ENCODE measurements at regions of chr3 and their contacts with region 1.

Region 1: DNA sequence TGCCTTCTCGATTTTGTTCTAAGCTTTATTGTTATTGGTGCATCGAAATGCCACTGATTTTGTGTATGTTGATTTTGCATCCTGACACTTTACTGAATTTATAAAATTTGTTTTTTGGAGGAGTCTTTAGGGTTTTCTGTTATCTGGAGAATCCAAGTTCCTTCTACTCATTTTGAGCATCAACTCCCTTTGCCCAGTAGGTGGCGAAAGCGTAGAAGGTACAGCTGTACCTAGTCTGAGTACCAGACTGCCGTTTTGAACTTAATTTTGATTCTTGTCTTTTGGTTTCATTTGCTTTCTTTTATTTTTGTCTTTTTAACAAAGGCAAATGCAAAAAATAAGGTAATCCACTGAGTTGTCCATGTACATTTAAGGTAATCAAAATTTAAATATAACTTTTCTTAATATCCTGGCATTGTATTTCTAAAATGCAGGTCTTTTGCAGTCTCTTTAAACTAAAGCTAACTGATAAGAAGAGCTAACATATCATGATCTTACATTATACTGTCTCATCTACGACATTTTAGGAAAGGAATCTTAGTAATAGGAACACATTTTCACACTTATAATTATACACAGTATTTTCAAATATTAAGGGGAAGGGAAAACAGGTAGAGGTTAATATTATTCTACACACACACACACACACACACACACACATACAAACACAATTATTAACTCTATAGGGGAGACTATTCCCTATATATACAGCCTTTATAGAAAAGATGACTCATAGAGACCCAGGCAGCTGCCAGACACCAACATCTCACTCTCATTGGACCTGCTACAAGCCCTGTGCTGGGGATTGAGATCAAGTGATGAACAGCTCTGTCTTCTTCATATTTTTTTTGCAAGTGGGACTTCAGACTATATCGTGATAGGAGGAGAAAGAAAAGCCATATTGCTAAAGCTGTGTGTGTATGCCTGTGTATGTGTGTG is 71.7 kb downstream of the SYNPR start:
- DNase-seq: peak; percentile 42
- CTCF ChIP-seq: peak; percentile 74

Region 2: GRCh38 chr3:63092520-63092919 is 257.3 kb before region 1 on chr3:
- in situ Hi-C with region 1: no loop called
- DNase-seq: no peak
- CTCF ChIP-seq: no peak

Region 3: GRCh38 chr3:63818281-63819150 is 468.7 kb after region 1 on chr3:
- in situ Hi-C with region 1: loop called (anchors 5 kb)
- DNase-seq: peak; percentile 44
- CTCF ChIP-seq: peak; percentile 77

Region 4: DNA sequence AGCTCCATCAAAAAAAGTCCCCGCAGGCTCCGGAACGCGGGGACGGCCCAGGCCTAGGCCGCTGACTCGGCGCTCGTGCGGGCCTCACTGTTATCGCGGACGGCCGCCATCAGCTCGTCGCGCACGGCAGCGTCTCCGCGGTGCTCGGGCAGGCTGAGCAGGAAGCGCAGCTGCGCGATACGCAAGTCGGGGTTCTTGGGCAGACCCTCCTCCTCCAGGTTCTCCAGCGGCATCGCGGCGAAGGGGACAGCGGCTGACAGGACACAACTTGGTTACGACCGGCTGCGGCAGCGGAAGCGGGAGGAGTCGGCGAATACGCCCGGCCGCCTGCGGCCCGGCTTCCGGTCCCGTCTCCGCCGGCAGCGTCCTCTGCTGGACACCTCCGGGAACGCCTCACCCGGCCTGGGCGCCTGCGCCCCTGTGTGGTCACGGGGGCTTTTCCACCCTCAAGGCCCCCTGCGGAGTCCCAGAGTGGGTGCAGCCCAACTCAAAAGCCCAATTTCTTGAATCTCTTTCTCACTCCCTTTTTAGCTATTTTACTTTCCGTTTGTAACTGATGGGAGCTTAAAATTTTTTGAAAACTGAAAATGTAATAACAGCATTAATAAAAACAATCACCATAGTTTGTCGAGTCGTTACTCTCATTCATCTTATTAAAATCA is 673.5 kb after region 1 on chr3 and contains the start of gene PSMD6:
- in situ Hi-C with region 1: loop called (anchors 25 kb)
- DNase-seq: peak; percentile 87
- CTCF ChIP-seq: peak; percentile 100

Measured in GM13977 (cell line).